ENCODE measurements at regions of chr3 and their contacts with region 1.

Region 1: DNA sequence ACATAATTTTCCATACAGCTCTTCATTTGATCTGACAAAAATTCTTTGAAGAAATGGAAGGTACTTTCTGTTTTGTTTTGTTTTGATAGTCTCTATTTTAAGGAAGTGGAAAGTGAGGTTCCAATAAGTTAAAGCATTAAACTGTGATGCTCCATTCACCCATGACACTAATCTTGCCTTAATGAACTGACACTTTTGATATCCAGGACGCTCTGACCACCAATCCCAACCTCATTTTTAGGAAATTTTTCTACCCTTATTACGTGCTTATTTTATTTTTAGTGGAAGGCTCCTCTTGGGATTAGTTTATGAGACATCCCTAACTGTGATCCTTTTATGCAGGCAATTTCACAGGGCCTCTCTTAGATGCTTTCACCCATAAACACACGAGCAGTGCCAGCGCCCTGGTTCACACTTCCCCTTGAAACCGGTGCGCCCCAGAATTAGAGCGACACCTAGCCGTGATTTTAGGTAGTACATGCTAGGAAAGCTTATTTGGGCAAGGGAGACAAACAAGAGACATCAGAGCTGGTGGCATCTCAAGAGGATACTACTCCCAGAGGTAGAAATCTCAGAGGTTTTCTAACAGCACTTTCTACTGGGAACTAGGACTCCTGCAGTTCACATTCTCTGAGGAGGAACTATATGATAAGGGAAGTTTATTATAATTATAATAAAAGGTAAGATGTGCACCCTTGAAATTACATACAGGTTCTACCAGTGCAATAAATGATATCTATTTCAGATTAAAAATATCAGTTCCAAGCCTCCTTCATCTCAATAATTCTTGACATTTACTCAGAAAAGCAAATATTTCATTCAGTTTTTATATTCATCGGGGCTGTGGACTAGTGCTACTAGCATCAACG is 173.9 kb downstream of the SLC9A9 start:
- DNase-seq: peak; percentile 65
- ATAC-seq: peak; percentile 96
- H3K4me3 ChIP-seq: no peak overlapping the region; a peak in 1 of 4 replicates
- H3K27ac ChIP-seq: no peak overlapping the region
- H3K4me1 ChIP-seq: peaks cover 0 to 2% of the 10 kb centered on the region in 2 experiments; a peak in 1 of 4 replicates
- H3K27me3 ChIP-seq: peaks cover 4% of the 10 kb centered on the region; the same call in 1 of the 2 replicates
- CTCF ChIP-seq: peak; percentile 64 to 96 (median 87)
- POLR2A ChIP-seq: no peak
- RAD21 ChIP-seq: peak; percentile 83

Region 2: GRCh38 chr3:143252931-143253330 is 421.4 kb before region 1 on chr3:
- CTCF ChIA-PET with region 1: no interaction called
- POLR2A ChIA-PET with region 1: no interaction called
- RAD21 ChIA-PET with region 1: no interaction called
- intact Hi-C with region 1: no loop called
- DNase-seq: no peak
- ATAC-seq: no peak
- H3K4me3 ChIP-seq: no peak overlapping the region
- H3K27ac ChIP-seq: no peak overlapping the region
- H3K4me1 ChIP-seq: no peaks in the 10 kb centered on the region
- H3K27me3 ChIP-seq: no peaks in the 10 kb centered on the region
- CTCF ChIP-seq: no peak
- POLR2A ChIP-seq: no peak
- RAD21 ChIP-seq: no peak

Region 3: GRCh38 chr3:143380449-143380848 is 293.9 kb before region 1 on chr3:
- CTCF ChIA-PET with region 1: no interaction called
- POLR2A ChIA-PET with region 1: no interaction called
- RAD21 ChIA-PET with region 1: no interaction called
- intact Hi-C with region 1: no loop called
- DNase-seq: no peak
- ATAC-seq: no peak
- H3K4me3 ChIP-seq: no peak overlapping the region
- H3K27ac ChIP-seq: no peak overlapping the region
- H3K4me1 ChIP-seq: no peaks in the 10 kb centered on the region
- H3K27me3 ChIP-seq: no peaks in the 10 kb centered on the region
- CTCF ChIP-seq: no peak
- POLR2A ChIP-seq: no peak
- RAD21 ChIP-seq: no peak

Region 4: DNA sequence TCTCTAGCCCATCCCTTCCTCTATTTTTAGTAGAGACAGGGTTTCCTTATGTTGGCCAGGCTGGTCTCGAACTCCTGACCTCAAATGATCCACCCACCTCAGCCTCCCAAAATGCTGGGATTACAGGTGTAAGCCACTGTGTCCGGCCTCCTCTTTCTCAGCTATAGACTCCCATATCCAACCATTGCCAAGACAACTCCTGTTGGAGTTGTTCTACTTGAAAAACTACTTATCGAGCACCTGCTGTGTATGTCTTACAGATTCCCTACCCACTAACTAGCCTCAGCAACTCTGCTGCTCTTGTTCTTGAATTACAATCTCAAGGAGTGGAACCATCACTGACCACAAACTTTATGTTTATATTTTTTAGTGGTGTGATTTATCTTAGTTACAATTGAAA is 12.7 kb before region 1 on chr3:
- CTCF ChIA-PET with region 1: interaction called, 10 read pairs
- POLR2A ChIA-PET with region 1: no interaction called
- RAD21 ChIA-PET with region 1: no interaction called
- intact Hi-C with region 1: no loop called
- DNase-seq: no peak
- ATAC-seq: no peak
- H3K4me3 ChIP-seq: no peak overlapping the region
- H3K27ac ChIP-seq: no peak overlapping the region
- H3K4me1 ChIP-seq: no peaks in the 10 kb centered on the region
- H3K27me3 ChIP-seq: no peaks in the 10 kb centered on the region
- CTCF ChIP-seq: no peak
- POLR2A ChIP-seq: no peak
- RAD21 ChIP-seq: no peak

Region 5: DNA sequence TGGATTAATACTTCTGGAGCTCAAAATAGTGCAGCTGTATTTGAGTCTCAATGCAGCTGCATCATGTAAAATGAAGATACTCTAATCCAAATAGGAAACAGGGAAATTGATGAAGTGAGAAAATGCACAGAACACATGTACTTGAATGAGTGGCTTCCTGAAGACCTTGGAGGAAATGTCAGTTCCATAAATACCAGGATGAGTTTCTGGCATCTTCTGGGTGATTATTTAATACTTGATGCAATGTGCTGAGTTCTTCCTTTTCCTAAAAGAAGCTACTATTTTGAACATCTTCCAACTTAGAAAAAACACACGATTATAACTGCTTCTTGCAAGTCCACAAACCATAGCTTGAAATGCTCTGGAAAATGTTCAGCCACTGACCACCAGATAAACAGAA is 11.2 kb after region 1 on chr3:
- CTCF ChIA-PET with region 1: interaction called, 19 read pairs
- POLR2A ChIA-PET with region 1: no interaction called
- RAD21 ChIA-PET with region 1: no interaction called
- intact Hi-C with region 1: no loop called
- DNase-seq: no peak
- ATAC-seq: no peak
- H3K4me3 ChIP-seq: no peak overlapping the region
- H3K27ac ChIP-seq: no peak overlapping the region
- H3K4me1 ChIP-seq: no peaks in the 10 kb centered on the region
- H3K27me3 ChIP-seq: 0 out of 2 replicates have a peak, but pooled peaks cover 8% of the 10 kb centered on the region
- CTCF ChIP-seq: no peak
- POLR2A ChIP-seq: no peak
- RAD21 ChIP-seq: no peak

Region 6: DNA sequence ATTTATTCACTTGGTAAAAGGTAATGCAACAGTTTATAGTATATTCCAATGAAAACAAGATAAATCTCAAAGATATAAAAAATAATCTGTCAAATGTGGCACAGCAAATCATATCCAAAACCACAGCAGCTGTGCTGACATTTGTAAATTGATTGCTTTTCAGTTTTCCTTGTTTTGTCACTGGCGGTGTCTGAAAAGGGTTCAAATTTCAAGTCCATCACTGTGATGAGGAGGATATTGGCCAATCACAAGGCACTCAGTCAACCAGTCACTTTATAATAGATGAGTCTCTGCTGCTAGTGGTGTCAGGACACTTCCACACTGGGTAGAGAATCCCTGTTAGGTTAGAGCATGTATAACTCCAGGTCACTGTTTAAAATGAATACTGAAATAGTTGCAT is 19.2 kb after region 1 on chr3:
- CTCF ChIA-PET with region 1: interaction called, 11 read pairs
- POLR2A ChIA-PET with region 1: no interaction called
- RAD21 ChIA-PET with region 1: no interaction called
- intact Hi-C with region 1: no loop called
- DNase-seq: no peak
- ATAC-seq: no peak
- H3K4me3 ChIP-seq: no peak overlapping the region
- H3K27ac ChIP-seq: no peak overlapping the region
- H3K4me1 ChIP-seq: no peaks in the 10 kb centered on the region
- H3K27me3 ChIP-seq: no peaks in the 10 kb centered on the region
- CTCF ChIP-seq: no peak
- POLR2A ChIP-seq: no peak
- RAD21 ChIP-seq: no peak

Region 7: DNA sequence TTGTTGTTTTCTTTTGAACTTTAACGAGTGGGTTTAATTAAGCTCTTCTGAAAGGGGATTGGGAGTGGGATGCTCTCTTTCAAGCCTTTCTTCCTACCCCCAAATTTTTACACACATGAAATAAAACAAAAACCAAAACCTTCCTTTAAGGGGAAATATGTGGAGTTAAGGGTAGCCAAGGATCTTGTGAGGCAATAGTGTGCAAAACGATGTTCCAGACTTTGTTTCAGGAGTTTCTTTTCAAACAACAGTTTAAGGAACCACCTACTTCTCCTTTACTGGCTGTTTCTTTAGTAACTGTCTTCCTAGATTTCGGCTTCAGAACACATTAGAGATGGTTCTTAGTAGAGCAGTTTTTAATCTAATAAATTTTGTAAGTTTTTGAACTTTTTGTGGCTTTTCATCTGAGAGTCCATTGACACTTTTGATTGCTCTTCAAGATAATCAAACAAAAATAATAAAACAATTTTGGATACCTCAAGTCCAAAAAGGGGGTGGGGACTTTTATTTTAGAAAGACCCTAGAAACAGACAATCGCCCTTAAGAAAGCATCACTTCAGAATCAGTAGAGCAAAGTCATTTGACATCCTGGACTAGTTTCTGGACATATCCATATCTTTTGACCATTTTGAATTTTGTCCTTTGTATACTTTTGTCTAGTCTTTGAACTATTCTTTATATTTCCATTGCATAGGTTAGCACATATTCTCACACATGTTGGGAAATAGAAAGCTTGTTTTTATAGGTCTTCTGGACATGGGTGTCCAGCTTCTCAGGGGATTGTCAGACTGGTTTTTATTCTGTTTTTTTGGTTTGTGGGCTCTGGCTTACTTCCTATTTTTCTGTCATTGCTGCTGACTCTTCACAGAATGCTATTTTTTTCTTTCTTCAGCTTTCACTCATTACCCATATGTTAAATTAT is 303.3 kb after region 1 on chr3:
- CTCF ChIA-PET with region 1: no interaction called
- POLR2A ChIA-PET with region 1: no interaction called
- RAD21 ChIA-PET with region 1: no interaction called
- intact Hi-C with region 1: no loop called
- DNase-seq: no peak
- ATAC-seq: no peak
- H3K4me3 ChIP-seq: no peak overlapping the region
- H3K27ac ChIP-seq: no peak overlapping the region
- H3K4me1 ChIP-seq: peaks cover 5 to 10% of the 10 kb centered on the region in 2 experiments; a peak in 3 of 4 replicates
- H3K27me3 ChIP-seq: no peaks in the 10 kb centered on the region
- CTCF ChIP-seq: no peak
- POLR2A ChIP-seq: no peak
- RAD21 ChIP-seq: no peak